Naive thymus-derived CD4-positive, alpha-beta T cell (primary cell): ENCODE measurements at regions of chr7 and their contacts with region 1.

Region 1: DNA sequence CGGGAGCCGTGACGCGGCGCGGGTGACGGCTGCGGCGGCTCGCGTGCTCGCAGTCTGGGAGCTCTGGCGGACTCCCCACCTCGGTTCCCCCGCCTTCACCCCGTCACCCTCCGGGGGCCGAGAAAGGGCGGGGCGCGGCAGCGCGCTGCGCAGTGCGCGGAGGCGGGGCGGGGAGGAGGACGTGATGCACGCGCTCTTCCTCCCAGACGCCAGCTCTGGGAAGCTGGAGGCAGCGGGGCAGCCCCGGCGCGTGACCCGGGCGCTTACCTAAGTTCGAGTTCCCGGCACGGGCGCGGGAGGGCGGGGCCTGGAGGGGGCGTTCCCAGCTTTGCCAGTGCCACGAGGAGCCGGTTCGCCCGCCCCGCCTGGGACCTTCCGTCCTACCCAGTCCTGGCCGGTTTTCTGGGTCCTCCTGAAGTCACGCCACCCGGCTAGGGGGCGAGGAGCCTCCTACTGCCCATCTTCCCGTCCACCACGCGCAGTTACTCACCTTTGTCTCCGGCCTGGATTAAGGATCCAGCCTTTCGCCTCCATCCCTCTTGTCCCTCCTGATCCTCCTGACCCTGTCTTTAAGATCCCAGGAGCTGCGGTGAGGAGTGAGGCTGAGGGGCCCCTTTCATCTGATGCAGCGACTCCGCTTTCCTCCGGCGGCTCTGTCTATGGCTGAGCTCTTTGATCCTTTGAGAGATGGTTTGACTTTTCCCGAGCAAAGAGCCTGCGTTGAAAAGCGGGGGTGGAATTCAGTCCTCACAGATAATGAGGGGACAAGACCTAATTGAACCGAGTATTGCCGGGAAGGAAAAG is 470 bp upstream of the NAMPT start:
- DNase-seq: peak; percentile 92 to 99 (median 96)
- ATAC-seq: peak; percentile 94
- H3K4me3 ChIP-seq: peak overlapping the region; percentile 94
- H3K4me3 Mint-ChIP-seq: peak overlapping the region; percentile 91 to 99 (median 96)
- H3K27ac ChIP-seq: peak overlapping the region; percentile 94
- H3K27ac Mint-ChIP-seq: peak overlapping the region; percentile 84 to 99 (median 98)
- H3K4me1 ChIP-seq: peaks cover 9 to 10% of the 10 kb centered on the region in 2 donors
- H3K4me1 Mint-ChIP-seq: peaks cover 17 to 46% (median 33%) of the 10 kb centered on the region in 7 donors
- H3K27me3 ChIP-seq: no peaks in the 10 kb centered on the region
- H3K27me3 Mint-ChIP-seq: peaks cover 0 to under 1% (median 0%) of the 10 kb centered on the region in 5 donors

Region 2: DNA sequence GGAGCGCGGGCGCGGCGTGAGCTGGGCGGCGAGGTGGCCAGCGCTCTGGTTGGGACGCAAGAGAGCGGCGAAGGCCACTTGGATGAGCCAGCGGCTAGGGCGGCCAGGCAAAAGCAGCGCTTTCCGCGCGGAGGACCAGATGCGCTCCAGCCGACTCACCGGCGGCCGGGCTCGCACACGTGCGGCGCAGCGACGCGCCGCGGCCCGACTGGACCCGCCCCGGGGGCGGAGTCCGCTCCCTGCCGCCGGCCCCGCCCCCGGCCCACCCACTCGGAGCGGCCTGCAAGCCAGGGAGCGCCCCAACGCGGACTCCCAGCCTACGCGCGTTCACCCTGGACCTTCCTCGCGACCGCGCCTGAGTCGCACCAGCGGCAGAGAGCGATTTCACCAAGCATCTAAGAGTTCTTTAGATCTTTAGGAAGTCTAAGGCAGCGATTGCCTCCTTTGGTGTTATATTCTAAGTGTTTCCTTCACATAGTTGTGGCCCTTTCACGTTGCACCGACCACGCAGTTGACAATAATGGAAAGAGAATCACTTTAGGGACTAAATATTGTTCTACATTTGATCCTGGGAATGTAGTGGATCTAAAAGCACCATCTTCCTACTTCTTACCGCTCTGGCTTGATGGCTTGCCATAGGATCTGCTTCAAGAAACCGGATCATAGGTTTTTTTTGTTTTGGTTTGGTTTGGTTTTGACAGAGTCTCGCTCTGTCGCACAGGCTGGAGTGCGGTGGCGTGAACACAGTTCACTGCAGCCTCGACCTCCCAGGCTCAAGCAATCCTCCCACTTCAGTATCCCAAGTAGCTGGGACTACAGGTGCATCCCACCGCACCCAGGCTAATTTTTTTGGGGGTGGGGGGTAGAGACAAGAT is 763.0 kb before region 1 on chr7 and contains the start of gene PUS7:
- CTCF ChIA-PET with region 1: no interaction called
- POLR2A ChIA-PET with region 1: no interaction called
- intact Hi-C with region 1: loop called in 1 of 2 experiments (anchors 1 kb)
- DNase-seq: peak; percentile 53 to 81 (median 67)
- ATAC-seq: peak; percentile 97
- H3K4me3 ChIP-seq: peak within 1 kb of the TSS; percentile 68
- H3K4me3 Mint-ChIP-seq: peak within 1 kb of the TSS; percentile 92 to 99 (median 96)
- H3K27ac ChIP-seq: peak within 1 kb of the TSS; percentile 70
- H3K27ac Mint-ChIP-seq: peak within 1 kb of the TSS; percentile 74 to 96 (median 86)
- H3K4me1 ChIP-seq: peaks cover 5 to 8% of the 10 kb centered on the region in 2 donors
- H3K4me1 Mint-ChIP-seq: peaks cover 0 to 24% (median 17%) of the 10 kb centered on the region in 7 donors
- H3K27me3 ChIP-seq: no peaks in the 10 kb centered on the region
- H3K27me3 Mint-ChIP-seq: peaks cover 0 to 3% (median 0%) of the 10 kb centered on the region in 5 donors
- total RNA-seq, gene PUS7: 4.2 to 16.5 (median 5.4) TPM

Region 3: GRCh38 chr7:105808703-105809590 is 476.3 kb before region 1 on chr7:
- CTCF ChIA-PET with region 1: no interaction called
- POLR2A ChIA-PET with region 1: no interaction called
- intact Hi-C with region 1: loop called in 1 of 2 experiments (anchors 2 kb)
- DNase-seq: peak; percentile 11 to 77 (median 38)
- ATAC-seq: peak; percentile 94
- H3K4me3 ChIP-seq: peak overlapping the region; percentile 25
- H3K4me3 Mint-ChIP-seq: peak overlapping the region in 8 of 10 donors; percentile 1 to 68 (median 31)
- H3K27ac ChIP-seq: peak overlapping the region; percentile 15
- H3K27ac Mint-ChIP-seq: peak overlapping the region in 8 of 9 donors; percentile 0 to 93 (median 45)
- H3K4me1 ChIP-seq: peaks cover 33 to 50% of the 10 kb centered on the region in 2 donors
- H3K4me1 Mint-ChIP-seq: peaks cover 40 to 73% (median 65%) of the 10 kb centered on the region in 7 donors
- H3K27me3 ChIP-seq: no peaks in the 10 kb centered on the region
- H3K27me3 Mint-ChIP-seq: no peaks in the 10 kb centered on the region

Region 4: DNA sequence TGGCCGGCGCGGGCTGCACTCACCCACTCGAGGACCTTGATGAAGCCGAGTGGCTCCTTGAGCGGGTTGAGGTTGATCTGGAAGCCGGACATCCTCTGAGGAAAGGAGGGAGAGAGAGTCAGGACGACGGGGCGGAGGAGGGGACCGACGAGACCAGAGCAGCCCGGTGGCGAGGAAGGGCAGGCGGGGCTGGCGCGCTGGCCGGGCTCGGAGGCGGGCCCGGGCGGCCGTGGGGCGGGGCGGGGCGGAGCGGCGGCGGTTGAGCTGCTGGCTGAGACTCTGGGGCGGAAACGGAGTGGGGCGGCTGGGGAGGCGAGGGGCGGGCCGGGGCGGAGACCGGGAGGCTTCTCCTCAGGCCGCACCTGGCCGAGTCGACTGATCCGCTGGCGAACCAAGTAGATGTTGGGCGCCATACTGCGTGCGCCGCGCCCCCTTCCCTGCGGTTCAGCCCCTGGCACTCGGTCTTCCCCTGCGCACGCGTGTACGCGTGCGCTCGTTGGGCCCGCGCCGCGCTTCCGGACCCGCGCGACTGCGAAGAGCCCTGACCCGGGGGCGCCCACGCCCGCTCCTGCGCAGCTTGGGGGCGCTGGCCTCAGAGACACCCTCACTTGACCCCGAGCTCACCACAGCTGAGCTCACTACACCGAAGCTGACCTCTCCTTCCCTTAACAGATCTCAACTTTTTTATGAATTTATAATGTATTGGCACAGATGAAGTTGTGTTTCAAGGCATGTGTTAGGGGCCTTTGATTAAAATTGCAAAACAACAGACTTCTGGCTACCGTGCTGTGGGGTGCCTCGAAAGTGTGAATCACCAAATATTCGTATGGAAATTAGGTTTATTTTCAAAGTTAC is 172.9 kb before region 1 on chr7 and contains the start of gene SYPL1:
- CTCF ChIA-PET with region 1: no interaction called
- POLR2A ChIA-PET with region 1: interaction called, 3 read pairs
- intact Hi-C with region 1: loop called (anchors 1 kb)
- DNase-seq: peak; percentile 91 to 95 (median 93)
- ATAC-seq: peak; percentile 93
- H3K4me3 ChIP-seq: peak within 1 kb of the TSS; percentile 70
- H3K4me3 Mint-ChIP-seq: peak within 1 kb of the TSS; percentile 78 to 97 (median 92)
- H3K27ac ChIP-seq: peak within 1 kb of the TSS; percentile 83
- H3K27ac Mint-ChIP-seq: peak within 1 kb of the TSS; percentile 90 to 99 (median 96)
- H3K4me1 ChIP-seq: peaks cover 14 to 64% of the 10 kb centered on the region in 2 donors
- H3K4me1 Mint-ChIP-seq: peaks cover 45 to 82% (median 71%) of the 10 kb centered on the region in 7 donors
- H3K27me3 ChIP-seq: no peaks in the 10 kb centered on the region
- H3K27me3 Mint-ChIP-seq: peaks cover 0 to 4% (median 0%) of the 10 kb centered on the region in 5 donors
- total RNA-seq, gene SYPL1: 37.5 to 54.0 (median 46.6) TPM

Region 5: DNA sequence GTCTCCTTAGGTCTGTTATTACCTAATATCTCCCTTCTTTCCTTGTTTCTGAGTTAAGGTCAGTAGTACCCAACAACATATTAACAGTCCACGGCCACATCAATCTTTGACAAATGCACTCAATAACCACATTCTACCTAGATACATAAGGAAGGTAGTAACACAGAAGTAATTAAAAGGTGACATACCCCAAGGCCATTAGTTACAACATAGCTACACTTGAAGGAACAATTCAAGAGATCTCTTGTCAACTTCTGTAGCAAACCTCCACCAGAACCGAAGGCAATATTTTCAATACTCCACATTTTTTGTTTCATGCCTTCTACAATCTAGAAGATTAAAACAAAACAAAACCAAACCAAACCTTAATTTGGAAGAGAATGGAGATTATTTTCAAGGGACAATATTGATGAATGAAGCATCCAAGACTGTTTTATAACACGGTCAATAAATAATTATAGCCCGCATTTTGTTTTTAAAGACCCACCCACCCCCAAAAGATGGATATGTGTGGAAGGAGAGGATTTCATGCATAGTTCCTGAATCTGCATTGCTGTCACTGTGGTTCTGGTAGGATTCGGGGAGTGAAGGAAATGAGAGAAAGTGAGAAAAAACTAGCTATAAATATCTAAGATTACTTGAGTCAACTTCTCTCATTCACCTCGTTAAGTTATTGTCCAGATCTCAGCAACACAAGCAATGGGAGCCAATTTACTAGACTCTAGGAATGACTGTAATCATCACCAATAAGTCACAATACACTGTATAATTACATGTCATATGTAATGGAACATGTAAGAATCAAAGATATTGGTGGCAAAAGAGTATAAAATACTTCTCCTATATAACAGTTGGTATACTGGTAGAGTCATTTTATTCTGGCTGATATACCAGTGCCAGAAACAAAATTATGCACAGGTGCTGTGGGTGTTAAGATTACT is 30.8 kb before region 1 on chr7:
- CTCF ChIA-PET with region 1: no interaction called
- POLR2A ChIA-PET with region 1: no interaction called
- intact Hi-C with region 1: no loop called
- DNase-seq: no peak
- ATAC-seq: no peak
- H3K4me3 ChIP-seq: no peak overlapping the region
- H3K4me3 Mint-ChIP-seq: no peak overlapping the region
- H3K27ac ChIP-seq: no peak overlapping the region
- H3K27ac Mint-ChIP-seq: no peak overlapping the region
- H3K4me1 ChIP-seq: no peaks in the 10 kb centered on the region
- H3K4me1 Mint-ChIP-seq: peaks cover 0 to 30% (median 0%) of the 10 kb centered on the region in 7 donors
- H3K27me3 ChIP-seq: no peaks in the 10 kb centered on the region
- H3K27me3 Mint-ChIP-seq: no peaks in the 10 kb centered on the region

Region 6: GRCh38 chr7:106346678-106347217 is 61.5 kb after region 1 on chr7:
- CTCF ChIA-PET with region 1: no interaction called
- POLR2A ChIA-PET with region 1: no interaction called
- intact Hi-C with region 1: loop called (anchors 1 kb)
- DNase-seq: peak in 8 of 9 donors; percentile 28 to 61 (median 50)
- ATAC-seq: peak; percentile 78
- H3K4me3 ChIP-seq: no peak overlapping the region
- H3K4me3 Mint-ChIP-seq: peak overlapping the region in 1 of 10 donors; percentile 47
- H3K27ac ChIP-seq: no peak overlapping the region
- H3K27ac Mint-ChIP-seq: peak overlapping the region in 2 of 9 donors; percentile 19 to 94
- H3K4me1 ChIP-seq: peaks cover 6 to 19% of the 10 kb centered on the region in 2 donors
- H3K4me1 Mint-ChIP-seq: peaks cover 5 to 35% (median 13%) of the 10 kb centered on the region in 7 donors
- H3K27me3 ChIP-seq: no peaks in the 10 kb centered on the region
- H3K27me3 Mint-ChIP-seq: peaks cover 1 to 61% (median 31%) of the 10 kb centered on the region in 5 donors

Region 7: GRCh38 chr7:106520962-106521940 is 236.0 kb after region 1 on chr7:
- CTCF ChIA-PET with region 1: no interaction called
- POLR2A ChIA-PET with region 1: no interaction called
- intact Hi-C with region 1: no loop called
- DNase-seq: no peak
- ATAC-seq: no peak
- H3K4me3 ChIP-seq: no peak overlapping the region
- H3K4me3 Mint-ChIP-seq: no peak overlapping the region
- H3K27ac ChIP-seq: no peak overlapping the region
- H3K27ac Mint-ChIP-seq: no peak overlapping the region
- H3K4me1 ChIP-seq: no peaks in the 10 kb centered on the region
- H3K4me1 Mint-ChIP-seq: peaks cover 10 to 19% (median 13%) of the 10 kb centered on the region in 7 donors
- H3K27me3 ChIP-seq: no peaks in the 10 kb centered on the region
- H3K27me3 Mint-ChIP-seq: peaks cover 14 to 31% (median 28%) of the 10 kb centered on the region in 5 donors

Region 8: GRCh38 chr7:106659963-106660861 is 375.0 kb after region 1 on chr7:
- CTCF ChIA-PET with region 1: no interaction called
- POLR2A ChIA-PET with region 1: no interaction called
- intact Hi-C with region 1: loop called (anchors 1 kb)
- DNase-seq: peak; percentile 58 to 84 (median 68)
- ATAC-seq: peak; percentile 72
- H3K4me3 ChIP-seq: peak overlapping the region; percentile 73
- H3K4me3 Mint-ChIP-seq: peak overlapping the region; percentile 85 to 97 (median 91)
- H3K27ac ChIP-seq: peak overlapping the region; percentile 68
- H3K27ac Mint-ChIP-seq: peak overlapping the region; percentile 86 to 97 (median 92)
- H3K4me1 ChIP-seq: peaks cover 13 to 16% of the 10 kb centered on the region in 2 donors
- H3K4me1 Mint-ChIP-seq: peaks cover 0 to 41% (median 29%) of the 10 kb centered on the region in 7 donors
- H3K27me3 ChIP-seq: no peaks in the 10 kb centered on the region
- H3K27me3 Mint-ChIP-seq: peaks cover 0 to 3% (median 0%) of the 10 kb centered on the region in 5 donors

Region 9: DNA sequence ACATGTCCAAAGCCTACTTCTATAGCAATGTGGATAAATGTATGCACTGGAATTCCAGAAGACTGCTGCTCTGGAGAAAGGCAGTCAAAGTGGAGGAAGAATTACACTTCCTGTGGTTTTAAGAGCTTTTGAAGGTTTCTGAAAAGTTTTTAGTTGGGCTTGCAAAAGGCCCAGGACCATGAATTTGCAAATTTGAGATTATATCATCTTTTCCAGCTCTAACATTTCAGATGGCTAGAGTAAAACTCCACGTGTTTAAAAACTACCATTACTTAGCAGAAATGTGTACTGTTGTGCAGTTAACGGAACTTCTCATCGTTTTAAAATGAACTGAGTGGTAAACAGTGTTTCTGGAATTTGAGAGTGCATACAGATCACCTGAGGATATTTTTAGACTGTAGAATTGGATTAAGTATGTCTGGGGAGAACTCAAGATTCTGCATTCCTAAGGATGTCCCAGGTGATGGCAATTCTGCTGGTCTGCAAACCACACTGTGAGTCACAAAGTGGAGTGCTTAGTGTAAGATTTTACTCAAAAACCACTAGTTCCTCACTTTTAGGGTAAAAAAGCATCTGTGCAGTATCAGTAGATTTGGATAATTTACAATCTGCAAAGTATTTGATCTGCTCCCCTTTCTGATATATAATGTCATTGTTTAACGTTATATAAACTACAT is 408.6 kb after region 1 on chr7:
- CTCF ChIA-PET with region 1: no interaction called
- POLR2A ChIA-PET with region 1: no interaction called
- intact Hi-C with region 1: no loop called
- DNase-seq: no peak
- ATAC-seq: no peak
- H3K4me3 ChIP-seq: no peak overlapping the region
- H3K4me3 Mint-ChIP-seq: no peak overlapping the region
- H3K27ac ChIP-seq: no peak overlapping the region
- H3K27ac Mint-ChIP-seq: no peak overlapping the region
- H3K4me1 ChIP-seq: no peaks in the 10 kb centered on the region
- H3K4me1 Mint-ChIP-seq: peaks cover 5 to 18% (median 6%) of the 10 kb centered on the region in 7 donors
- H3K27me3 ChIP-seq: no peaks in the 10 kb centered on the region
- H3K27me3 Mint-ChIP-seq: no peaks in the 10 kb centered on the region

Region 10: GRCh38 chr7:107743567-107744344 is 1458.5 kb after region 1 on chr7 and contains the start of gene CBLL1:
- CTCF ChIA-PET with region 1: no interaction called
- POLR2A ChIA-PET with region 1: no interaction called
- intact Hi-C with region 1: loop called in 1 of 2 experiments (anchors 1 kb)
- DNase-seq: peak; percentile 95 to 98 (median 97)
- ATAC-seq: peak; percentile 95
- H3K4me3 ChIP-seq: peak within 1 kb of the TSS; percentile 90
- H3K4me3 Mint-ChIP-seq: peak within 1 kb of the TSS; percentile 93 to 100 (median 98)
- H3K27ac ChIP-seq: peak within 1 kb of the TSS; percentile 99
- H3K27ac Mint-ChIP-seq: peak within 1 kb of the TSS; percentile 99 to 100 (median 100)
- H3K4me1 ChIP-seq: peaks cover 35 to 36% of the 10 kb centered on the region in 2 donors
- H3K4me1 Mint-ChIP-seq: peaks cover 28 to 58% (median 54%) of the 10 kb centered on the region in 7 donors
- H3K27me3 ChIP-seq: no peaks in the 10 kb centered on the region
- H3K27me3 Mint-ChIP-seq: peaks cover 0 to 3% (median 0%) of the 10 kb centered on the region in 5 donors
- total RNA-seq, gene CBLL1: 41.5 to 54.4 (median 51.1) TPM